Mammary epithelial cell (primary cell): ENCODE measurements at regions of chr15 and their contacts with region 1.

Region 1: DNA sequence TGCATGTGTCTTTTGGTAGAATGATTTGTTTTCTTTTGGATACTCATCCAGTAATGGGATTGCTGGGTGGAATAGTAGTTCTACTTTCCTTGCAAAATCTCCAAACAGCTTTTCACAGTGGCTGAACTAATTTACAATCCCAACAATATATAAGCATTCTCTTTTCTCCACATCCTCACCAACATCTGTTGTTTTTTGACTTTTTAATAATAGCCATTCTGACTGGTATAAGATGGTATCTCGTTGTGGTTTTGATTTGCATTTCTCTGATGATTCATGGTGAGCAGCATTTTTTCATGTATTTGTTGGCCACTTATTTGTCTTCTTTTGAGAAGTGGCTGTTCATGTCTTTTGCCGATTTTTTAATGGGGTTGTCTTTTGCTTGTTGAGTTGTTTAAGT is 55.8 kb downstream of the ST8SIA2 start:
- DNase-seq: peak; percentile 73
- H3K4me3 ChIP-seq: no peak overlapping the region
- H3K27ac ChIP-seq: no peak overlapping the region
- H3K4me1 ChIP-seq: peaks cover 23% of the 10 kb centered on the region
- H3K27me3 ChIP-seq: no peaks in the 10 kb centered on the region
- CTCF ChIP-seq: no peak

Region 2: GRCh38 chr15:92595506-92596381 is 146.3 kb after region 1 on chr15:
- CTCF ChIA-PET with region 1: interaction called, 10 read pairs
- dilution Hi-C with region 1: no loop called
- in situ Hi-C with region 1: no loop called
- intact Hi-C with region 1: no loop called
- DNase-seq: no peak
- H3K4me3 ChIP-seq: no peak overlapping the region
- H3K27ac ChIP-seq: no peak overlapping the region
- H3K4me1 ChIP-seq: no peaks in the 10 kb centered on the region
- H3K27me3 ChIP-seq: peaks cover under 1% of the 10 kb centered on the region
- CTCF ChIP-seq: no peak